Psoas muscle (tissue), 8 donors: ENCODE measurements at regions of chr10 and their contacts with region 1.

Region 1: DNA sequence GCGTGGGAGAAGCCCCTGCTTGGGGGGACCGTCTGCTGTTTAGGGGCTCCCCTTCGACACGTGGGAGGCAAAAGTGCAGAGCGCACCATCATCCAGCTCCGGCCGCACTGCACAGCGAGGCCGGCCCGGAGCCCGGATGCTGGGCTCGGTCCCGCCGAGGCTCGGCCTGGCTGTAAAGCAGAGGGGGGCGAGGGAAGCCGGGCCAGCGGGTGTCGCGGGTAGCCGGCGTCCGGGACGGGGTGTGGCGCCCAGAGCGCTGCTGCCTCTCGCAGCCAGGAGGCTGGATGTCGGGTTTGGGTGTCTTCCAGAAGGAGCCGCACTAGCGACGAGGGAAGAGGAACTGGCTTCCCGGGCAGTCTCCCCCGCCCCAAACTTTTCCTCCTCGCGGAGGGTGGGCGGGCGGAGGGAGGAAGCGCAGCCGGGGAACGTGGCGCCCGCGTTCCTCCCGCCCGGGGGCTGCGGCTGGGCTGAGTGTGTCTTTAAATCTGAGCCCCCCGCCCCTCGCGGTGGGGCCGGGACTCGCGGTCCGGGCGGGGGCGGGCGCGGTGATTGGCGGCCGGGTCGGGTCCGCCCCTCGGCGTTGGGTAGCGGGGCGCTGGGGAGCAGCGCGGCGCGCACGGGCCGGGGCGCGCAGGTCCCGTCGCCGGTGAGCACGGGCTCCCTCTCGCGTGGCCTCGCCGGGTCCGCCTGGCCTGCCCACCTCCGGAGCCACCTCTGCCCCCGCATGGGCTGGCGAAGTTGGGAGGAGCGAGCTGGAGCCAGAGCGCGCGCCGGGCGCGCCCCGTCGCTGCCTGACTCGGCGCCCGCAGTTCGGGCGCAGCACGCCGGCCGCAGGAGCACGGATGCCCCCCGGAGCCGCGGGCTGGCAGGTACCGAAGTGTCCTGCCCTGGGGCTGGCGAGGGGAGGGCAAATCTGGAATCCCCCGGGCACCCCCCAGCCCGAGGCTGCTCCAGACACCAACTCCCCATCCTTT is at the start of gene PALD1:
- DNase-seq: peak; percentile 72 to 82
- ATAC-seq: peak; percentile 5 to 49 (median 41)
- H3K4me3 ChIP-seq: peak within 1 kb of the TSS; percentile 72
- H3K27ac ChIP-seq: peak within 1 kb of the TSS; percentile 59
- H3K4me1 ChIP-seq: peaks cover 52% of the 10 kb centered on the region
- H3K27me3 ChIP-seq: no peaks in the 10 kb centered on the region
- CTCF ChIP-seq: peak; percentile 22
- total RNA-seq, gene PALD1: 2.8 to 4.0 (median 3.3) TPM

Region 2: DNA sequence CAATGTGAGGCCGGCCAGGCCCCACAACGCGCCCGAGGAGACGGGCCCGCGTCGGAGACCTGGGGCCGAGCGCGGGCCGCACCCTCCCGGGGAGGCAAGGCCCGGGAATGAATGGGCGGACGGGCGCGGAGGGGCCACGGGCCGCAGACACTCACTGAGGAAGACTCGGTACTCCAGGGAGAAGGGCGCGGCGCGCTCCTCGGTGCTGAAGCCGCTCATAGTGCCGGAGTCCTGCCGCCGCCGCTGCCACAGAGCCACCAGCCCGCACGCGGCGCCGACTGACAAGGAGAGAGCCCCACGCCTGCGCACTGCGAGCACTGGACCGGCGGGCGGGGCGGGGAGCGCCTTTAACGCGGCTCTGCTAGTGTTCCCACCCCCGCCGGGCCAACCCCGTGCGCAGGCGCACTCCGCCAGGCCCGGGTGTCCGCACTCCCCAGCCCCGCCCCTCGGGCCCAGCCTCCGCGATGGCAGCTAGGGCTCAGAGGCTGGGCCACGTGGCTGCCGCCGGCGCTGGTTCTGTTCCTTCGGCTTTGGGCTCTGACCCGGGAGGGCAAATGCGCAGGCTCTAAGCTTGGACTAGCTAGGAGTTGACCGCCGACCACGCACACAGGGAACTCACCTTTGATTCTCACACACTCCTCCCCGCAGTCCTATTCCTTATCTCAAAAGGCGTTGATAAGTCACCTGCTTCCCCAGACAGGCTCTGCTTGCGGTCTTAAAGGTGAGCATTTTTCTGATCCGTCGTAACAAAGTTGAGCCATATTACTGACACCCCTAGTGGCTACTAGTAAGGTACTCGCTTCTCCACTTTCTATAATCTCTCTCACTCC is 245.2 kb before region 1 on chr10 and contains the start of gene PPA1:
- intact Hi-C with region 1: no loop called
- DNase-seq: peak; percentile 99 to 100
- ATAC-seq: peak; percentile 98 to 99 (median 98)
- H3K4me3 ChIP-seq: peak within 1 kb of the TSS; percentile 93
- H3K27ac ChIP-seq: peak within 1 kb of the TSS; percentile 84
- H3K4me1 ChIP-seq: peaks cover 16% of the 10 kb centered on the region
- H3K27me3 ChIP-seq: no peaks in the 10 kb centered on the region
- CTCF ChIP-seq: peak; percentile 27
- total RNA-seq, gene PPA1: 95.3 to 131 (median 114) TPM

Region 3: DNA sequence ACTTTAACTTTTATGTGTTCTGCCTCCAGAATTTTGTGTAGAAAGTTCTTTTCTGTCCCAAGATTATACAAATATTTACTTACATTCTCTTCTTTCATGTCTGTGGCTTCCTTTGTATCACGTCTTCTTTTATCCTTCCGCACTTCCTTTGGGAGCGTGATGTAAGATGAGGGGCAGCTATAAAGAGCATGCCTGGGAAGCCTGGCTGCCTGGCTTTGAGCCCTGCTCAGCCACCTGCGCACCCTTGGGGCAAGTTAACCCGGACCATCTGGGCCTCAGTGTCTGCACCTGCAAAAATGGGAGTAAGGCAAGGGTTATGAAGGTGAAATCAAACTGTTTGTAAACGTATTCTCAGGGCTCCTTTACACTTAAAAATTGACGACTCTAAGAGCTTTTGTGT is 25.3 kb after region 1 on chr10:
- intact Hi-C with region 1: no loop called
- DNase-seq: no peak
- ATAC-seq: no peak
- H3K4me3 ChIP-seq: no peak overlapping the region
- H3K27ac ChIP-seq: no peak overlapping the region
- H3K4me1 ChIP-seq: peaks cover 22% of the 10 kb centered on the region
- H3K27me3 ChIP-seq: no peaks in the 10 kb centered on the region
- CTCF ChIP-seq: no peak

Region 4: GRCh38 chr10:70513848-70514309 is 35.4 kb after region 1 on chr10:
- intact Hi-C with region 1: loop called in 1 of 2 experiments (anchors 5 kb)
- DNase-seq: no peak
- ATAC-seq: no peak
- H3K4me3 ChIP-seq: no peak overlapping the region
- H3K27ac ChIP-seq: no peak overlapping the region
- H3K4me1 ChIP-seq: peaks cover 46% of the 10 kb centered on the region
- H3K27me3 ChIP-seq: no peaks in the 10 kb centered on the region
- CTCF ChIP-seq: no peak

Region 5: DNA sequence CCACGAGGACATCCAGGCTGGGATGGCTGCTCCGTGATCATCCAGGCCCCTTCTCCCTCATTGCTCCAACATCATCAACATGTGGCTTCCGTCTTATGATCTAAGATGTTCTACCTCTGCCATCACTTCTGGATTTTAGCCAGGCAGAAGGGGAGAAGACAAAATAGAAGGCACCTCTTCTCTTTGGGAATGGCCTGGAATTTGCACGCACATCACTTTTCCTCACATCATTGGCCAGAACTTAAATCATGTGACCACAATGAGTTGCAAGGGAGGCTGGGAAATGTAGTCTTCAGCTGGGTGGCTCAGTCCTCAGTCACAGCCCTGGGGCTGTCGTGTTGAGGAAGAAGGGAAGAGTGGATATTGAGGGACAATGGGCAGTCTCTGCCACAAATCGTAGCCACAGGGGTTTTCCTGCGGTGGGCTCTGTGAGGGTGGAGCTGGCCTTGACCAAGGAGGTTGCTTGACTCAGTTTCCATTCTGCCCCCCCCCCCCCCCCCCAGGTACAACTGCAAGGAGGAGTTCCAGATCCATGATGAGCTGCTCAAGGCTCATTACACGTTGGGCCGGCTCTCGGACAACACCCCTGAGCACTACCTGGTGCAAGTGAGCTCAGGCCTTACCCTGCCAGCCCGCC is 50.4 kb after region 1 on chr10:
- intact Hi-C with region 1: no loop called
- DNase-seq: no peak
- ATAC-seq: peak; percentile 54 to 89 (median 68)
- H3K4me3 ChIP-seq: no peak overlapping the region
- H3K27ac ChIP-seq: no peak overlapping the region
- H3K4me1 ChIP-seq: no peaks in the 10 kb centered on the region
- H3K27me3 ChIP-seq: no peaks in the 10 kb centered on the region
- CTCF ChIP-seq: no peak